ENCODE measurements at regions of chr15 and their contacts with region 1.

Region 1: DNA sequence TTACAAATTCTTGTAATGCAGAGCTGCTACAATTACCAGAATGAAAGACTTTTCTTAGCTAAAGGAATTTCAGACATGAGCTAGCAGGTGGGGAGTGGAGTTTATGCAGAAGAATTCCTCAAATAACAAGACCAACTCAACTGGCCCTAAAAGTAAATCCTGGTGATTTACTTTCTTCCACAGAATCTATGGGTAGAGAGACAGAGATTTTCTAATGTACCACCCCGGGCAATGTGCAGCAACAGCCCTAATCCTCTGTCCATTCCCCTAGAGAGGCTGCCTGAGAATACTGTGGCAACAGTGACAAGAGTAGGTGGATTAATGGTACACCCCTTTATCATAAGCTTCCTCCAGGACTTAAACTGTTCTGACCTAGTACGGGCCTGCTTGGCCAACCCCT is 55.2 kb downstream of the AQR start:
- DNase-seq: no peak
- H3K4me3 ChIP-seq: no peak overlapping the region
- H3K27ac ChIP-seq: peak overlapping the region in 1 of 2 experiments; percentile 18
- H3K4me1 ChIP-seq: no peaks in the 10 kb centered on the region
- H3K27me3 ChIP-seq: no peaks in the 10 kb centered on the region

Region 2: GRCh38 chr15:34621675-34622074 is 292.6 kb before region 1 on chr15:
- CTCF ChIA-PET with region 1: interaction called, 16 read pairs
- POLR2A ChIA-PET with region 1: no interaction called
- DNase-seq: peak in 2 of 3 donors; percentile 67 to 70
- H3K4me3 ChIP-seq: peak overlapping the region in 1 of 7 experiments; percentile 49
- H3K27ac ChIP-seq: peak overlapping the region; percentile 41 to 56
- H3K4me1 ChIP-seq: peaks cover 2 to 23% (median 19%) of the 10 kb centered on the region in 4 experiments
- H3K27me3 ChIP-seq: no peaks in the 10 kb centered on the region